ENCODE measurements at regions of chr11 and their contacts with region 1.

Region 1: DNA sequence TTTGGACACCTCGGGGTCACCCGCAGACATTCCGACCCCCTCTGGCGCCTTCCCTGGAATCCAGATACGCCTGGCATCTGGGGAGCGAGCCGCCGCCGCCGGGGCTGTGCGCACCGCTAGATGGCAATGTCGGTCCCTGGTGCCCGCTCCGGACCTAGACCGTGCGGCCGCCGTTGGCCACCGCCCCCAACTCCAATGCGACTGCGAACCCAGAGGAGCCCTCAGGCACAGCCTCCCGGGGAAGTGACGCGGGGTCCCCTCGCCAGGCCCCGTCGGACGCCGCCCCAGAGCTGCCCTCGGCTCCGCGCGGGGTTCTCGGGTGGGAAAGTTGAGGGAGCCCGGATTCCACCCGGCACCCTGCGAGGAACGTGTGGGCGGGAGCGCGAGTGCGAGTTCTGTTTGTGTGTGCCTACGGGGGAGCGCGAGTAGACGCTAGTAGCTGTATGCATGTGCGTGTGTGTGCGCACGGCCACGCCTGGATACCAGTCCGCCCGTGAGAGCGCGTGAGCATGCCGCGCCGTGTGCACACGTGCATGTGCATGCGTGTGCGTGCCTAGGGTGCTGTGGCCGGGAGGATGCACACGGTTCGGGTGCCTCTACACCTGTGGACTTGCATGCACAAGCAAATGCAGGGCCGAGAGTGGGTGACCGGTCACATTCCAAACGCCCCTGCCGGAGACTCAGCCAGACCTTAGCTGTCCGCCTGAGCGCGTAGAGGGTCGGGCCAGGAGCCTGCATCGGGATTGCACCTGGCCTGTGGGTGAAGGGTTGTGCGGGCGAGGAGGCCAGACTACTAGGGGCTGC is 1.9 kb downstream of the CHRM4 start:
- DNase-seq: peak; percentile 45
- H3K4me3 Mint-ChIP-seq: peak overlapping the region; percentile 60
- H3K27ac Mint-ChIP-seq: no peak overlapping the region
- H3K4me1 Mint-ChIP-seq: peaks cover 23% of the 10 kb centered on the region
- H3K27me3 Mint-ChIP-seq: peaks cover 52% of the 10 kb centered on the region

Region 2: GRCh38 chr11:46160100-46160499 is 229.6 kb before region 1 on chr11:
- intact Hi-C with region 1: no loop called
- DNase-seq: no peak
- H3K4me3 Mint-ChIP-seq: no peak overlapping the region
- H3K27ac Mint-ChIP-seq: no peak overlapping the region
- H3K4me1 Mint-ChIP-seq: peaks cover 9% of the 10 kb centered on the region
- H3K27me3 Mint-ChIP-seq: peaks cover 27% of the 10 kb centered on the region

Region 3: GRCh38 chr11:46198246-46199240 is 191.1 kb before region 1 on chr11:
- intact Hi-C with region 1: no loop called
- DNase-seq: no peak
- H3K4me3 Mint-ChIP-seq: no peak overlapping the region
- H3K27ac Mint-ChIP-seq: no peak overlapping the region
- H3K4me1 Mint-ChIP-seq: no peaks in the 10 kb centered on the region
- H3K27me3 Mint-ChIP-seq: peaks cover 14% of the 10 kb centered on the region

Region 4: DNA sequence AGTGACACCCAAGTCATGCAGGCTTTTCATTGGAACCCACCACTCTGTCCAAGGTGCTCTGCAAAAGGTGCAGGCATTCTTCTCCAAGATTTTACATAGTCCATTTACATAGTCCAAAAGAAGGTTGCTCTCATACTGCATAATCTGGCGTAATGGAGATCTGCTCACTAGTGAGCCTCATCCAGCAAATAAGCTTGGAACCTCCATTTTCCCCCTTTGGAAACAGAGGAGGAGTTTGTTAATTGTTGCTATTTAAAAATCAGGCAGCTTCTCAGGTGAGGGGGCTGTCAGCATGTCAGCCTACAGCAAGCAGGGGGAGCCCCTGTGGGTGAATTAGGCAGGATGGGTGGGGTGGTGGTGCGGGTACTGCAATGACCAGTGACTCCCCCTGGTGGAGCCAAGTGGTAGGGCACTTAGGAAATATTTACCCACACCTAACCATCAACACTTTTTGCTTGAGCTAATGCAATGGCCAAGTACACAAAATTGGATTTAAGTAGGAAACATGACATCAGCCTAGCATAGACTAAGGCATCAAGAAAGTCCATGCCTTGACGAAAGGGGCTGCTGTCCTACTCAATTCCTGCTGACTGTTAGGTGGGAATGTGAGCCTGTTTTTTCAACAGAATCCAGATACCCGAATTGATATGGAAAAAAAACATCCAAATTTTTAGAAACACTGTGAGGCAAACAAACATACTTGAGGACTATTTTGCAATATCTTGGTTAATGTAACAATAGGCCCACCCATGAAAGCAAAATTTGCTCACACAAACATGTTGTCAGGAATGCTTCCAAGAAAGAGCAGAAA is 139.6 kb after region 1 on chr11:
- intact Hi-C with region 1: loop called (anchors 2 kb)
- DNase-seq: peak; percentile 57
- H3K4me3 Mint-ChIP-seq: no peak overlapping the region
- H3K27ac Mint-ChIP-seq: no peak overlapping the region
- H3K4me1 Mint-ChIP-seq: peaks cover 22% of the 10 kb centered on the region
- H3K27me3 Mint-ChIP-seq: no peaks in the 10 kb centered on the region

Region 5: GRCh38 chr11:46537537-46538295 is 148.1 kb after region 1 on chr11:
- intact Hi-C with region 1: loop called (anchors 1 kb)
- DNase-seq: peak; percentile 47
- H3K4me3 Mint-ChIP-seq: no peak overlapping the region
- H3K27ac Mint-ChIP-seq: no peak overlapping the region
- H3K4me1 Mint-ChIP-seq: peaks cover 15% of the 10 kb centered on the region
- H3K27me3 Mint-ChIP-seq: no peaks in the 10 kb centered on the region

Region 6: DNA sequence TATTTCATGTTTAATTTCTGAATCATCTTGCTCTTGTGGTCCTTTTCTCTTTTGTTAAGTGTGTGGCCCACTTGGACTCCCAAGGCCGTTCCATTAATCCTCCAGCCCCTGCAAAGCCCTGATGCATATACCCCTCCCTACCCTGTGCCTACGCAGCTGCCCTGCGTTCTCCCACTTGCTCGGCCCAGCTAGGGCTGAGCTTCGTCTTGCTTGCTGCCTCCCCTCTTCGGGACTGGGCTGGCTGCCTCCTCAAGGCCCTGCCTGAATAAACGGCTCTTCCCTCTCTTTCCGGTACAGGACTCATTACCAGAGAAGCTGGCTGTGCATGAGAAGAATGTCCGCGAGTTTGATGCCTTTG is 282.3 kb after region 1 on chr11:
- intact Hi-C with region 1: loop called (anchors 1 kb)
- DNase-seq: no peak
- H3K4me3 Mint-ChIP-seq: peak overlapping the region; percentile 45
- H3K27ac Mint-ChIP-seq: peak overlapping the region; percentile 88
- H3K4me1 Mint-ChIP-seq: peaks cover 53% of the 10 kb centered on the region
- H3K27me3 Mint-ChIP-seq: no peaks in the 10 kb centered on the region